ENCODE measurements at regions of chr1 and their contacts with region 1.

Region 1: GRCh38 chr1:28736450-28737306 is at the start of gene YTHDF2:
- DNase-seq: peak; percentile 92 to 100 (median 96)
- ATAC-seq: peak; percentile 94
- H3K4me3 ChIP-seq: peak within 1 kb of the TSS; percentile 96
- H3K27ac ChIP-seq: peak within 1 kb of the TSS; percentile 92
- H3K4me1 ChIP-seq: peaks cover 18 to 24% of the 10 kb centered on the region in 2 experiments; a peak in 4 of 5 replicates
- H3K27me3 ChIP-seq: no peaks in the 10 kb centered on the region
- CTCF ChIP-seq: peak; percentile 82 to 95 (median 86)
- EP300 ChIP-seq: peak; percentile 42; the same call in 1 of the 2 replicates
- POLR2A ChIP-seq: peak; percentile 86
- RAD21 ChIP-seq: peak; percentile 36 to 54
- polyA plus RNA-seq, gene YTHDF2: 41.0 to 47.2 TPM

Region 2: GRCh38 chr1:28359592-28360239 is 377.0 kb before region 1 on chr1:
- CTCF ChIA-PET with region 1: no interaction called
- POLR2A ChIA-PET with region 1: no interaction called
- in situ Hi-C with region 1: no loop called
- intact Hi-C with region 1: loop called (anchors 10 kb)
- DNase-seq: peak; percentile 63 to 84 (median 68)
- ATAC-seq: peak; percentile 88
- H3K4me3 ChIP-seq: no peak overlapping the region
- H3K27ac ChIP-seq: no peak overlapping the region
- H3K4me1 ChIP-seq: peaks cover 6 to 7% of the 10 kb centered on the region in 2 experiments; a peak in 3 of 5 replicates
- H3K27me3 ChIP-seq: no peaks in the 10 kb centered on the region
- CTCF ChIP-seq: peak; percentile 65 to 86 (median 77)
- EP300 ChIP-seq: peak; percentile 33
- POLR2A ChIP-seq: no peak
- RAD21 ChIP-seq: peak; percentile 72 to 83

Region 3: DNA sequence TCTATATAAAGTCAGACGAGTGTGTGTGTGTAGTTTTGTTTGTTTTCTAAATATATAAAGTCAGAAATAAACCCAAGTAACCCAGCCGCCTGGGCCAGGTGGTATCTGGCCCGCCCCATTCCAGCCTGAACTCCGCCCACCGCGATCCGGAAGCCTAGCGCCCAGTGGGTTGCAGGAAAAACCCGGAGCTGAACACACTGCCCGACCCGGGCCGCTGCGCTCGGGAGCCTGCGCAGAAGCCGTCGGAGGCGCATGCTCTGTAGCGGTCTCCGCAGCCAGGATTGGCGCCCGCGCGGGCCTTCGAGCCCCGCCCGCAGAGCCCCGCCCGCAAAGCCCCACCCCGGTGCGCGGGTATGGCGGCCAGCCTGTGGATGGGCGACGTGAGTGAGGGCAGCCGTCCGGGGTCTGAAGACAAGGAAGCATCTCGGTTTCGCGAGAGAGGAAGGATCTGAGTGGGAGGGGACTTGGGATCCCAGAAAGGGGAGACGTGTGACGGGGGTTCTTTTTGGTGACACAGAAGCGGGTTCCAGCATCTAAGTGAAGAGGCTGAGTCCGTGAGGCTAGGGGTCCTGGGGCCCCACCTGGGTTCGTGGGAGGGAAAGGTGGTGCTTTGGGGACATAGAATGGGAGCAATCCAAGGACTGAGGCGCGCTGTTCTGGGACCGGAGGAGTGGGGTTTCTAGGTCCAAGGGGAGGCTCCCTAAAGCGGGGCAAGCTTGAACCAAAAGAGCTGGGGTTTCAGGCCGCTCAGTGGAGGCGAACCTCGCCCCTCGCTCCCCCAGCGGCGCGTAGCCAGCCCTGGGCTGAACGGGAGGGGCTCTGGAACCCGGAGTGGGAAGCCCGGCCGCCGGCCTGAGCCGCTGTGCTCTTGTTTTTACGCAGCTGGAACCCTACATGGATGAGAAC is 183.7 kb before region 1 on chr1 and contains the start of gene TRNAU1AP:
- CTCF ChIA-PET with region 1: no interaction called
- POLR2A ChIA-PET with region 1: no interaction called
- in situ Hi-C with region 1: no loop called
- intact Hi-C with region 1: no loop called
- DNase-seq: peak; percentile 98 to 99 (median 98)
- ATAC-seq: peak; percentile 98
- H3K4me3 ChIP-seq: peak within 1 kb of the TSS; percentile 57
- H3K27ac ChIP-seq: peak within 1 kb of the TSS; percentile 82
- H3K4me1 ChIP-seq: peaks cover 9 to 20% of the 10 kb centered on the region in 2 experiments; a peak in 4 of 5 replicates
- H3K27me3 ChIP-seq: no peaks in the 10 kb centered on the region
- CTCF ChIP-seq: 0 out of 6 replicates have a peak, but pooled peaks of 1 of the 3 experiments have one; percentile 0
- EP300 ChIP-seq: peak; percentile 47
- POLR2A ChIP-seq: peak; percentile 85
- RAD21 ChIP-seq: no peak
- polyA plus RNA-seq, gene TRNAU1AP: 99.0 to 110 TPM

Region 4: DNA sequence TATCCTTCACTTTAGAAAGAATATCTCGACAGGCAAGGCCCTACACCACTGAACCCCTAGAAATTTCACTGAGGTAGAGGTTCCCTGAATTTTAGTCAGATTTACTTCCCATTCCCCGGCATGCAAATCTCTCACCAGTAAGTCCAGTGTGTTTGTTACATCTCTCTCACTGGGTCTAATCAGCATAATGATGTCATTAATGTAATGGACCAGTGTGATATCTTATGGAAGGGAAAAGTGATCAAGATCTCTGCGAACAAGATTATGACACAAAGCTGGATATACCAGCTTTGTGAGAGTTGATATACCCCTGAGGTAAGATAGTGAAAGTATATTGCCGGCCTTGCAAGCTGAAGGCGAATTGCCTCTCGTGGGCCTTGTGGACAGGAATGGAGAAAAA is 80.3 kb before region 1 on chr1:
- CTCF ChIA-PET with region 1: no interaction called
- POLR2A ChIA-PET with region 1: interaction called, 6 read pairs
- in situ Hi-C with region 1: loop called (anchors 5 kb)
- intact Hi-C with region 1: no loop called
- DNase-seq: no peak
- ATAC-seq: no peak
- H3K4me3 ChIP-seq: no peak overlapping the region
- H3K27ac ChIP-seq: no peak overlapping the region
- H3K4me1 ChIP-seq: peaks cover 0 to 2% of the 10 kb centered on the region in 2 experiments; a peak in 1 of 5 replicates
- H3K27me3 ChIP-seq: no peaks in the 10 kb centered on the region
- CTCF ChIP-seq: no peak
- EP300 ChIP-seq: no peak
- POLR2A ChIP-seq: no peak
- RAD21 ChIP-seq: no peak

Region 5: GRCh38 chr1:28668191-28668955 is 68.3 kb before region 1 on chr1 and contains the start of gene GMEB1:
- CTCF ChIA-PET with region 1: no interaction called
- POLR2A ChIA-PET with region 1: interaction called, 14 read pairs
- in situ Hi-C with region 1: no loop called
- intact Hi-C with region 1: loop called (anchors 1 kb)
- DNase-seq: peak; percentile 95 to 100 (median 98)
- ATAC-seq: peak; percentile 91
- H3K4me3 ChIP-seq: peak within 1 kb of the TSS; percentile 98
- H3K27ac ChIP-seq: peak within 1 kb of the TSS; percentile 95
- H3K4me1 ChIP-seq: peaks cover 3 to 28% of the 10 kb centered on the region in 2 experiments; a peak in 4 of 5 replicates
- H3K27me3 ChIP-seq: no peaks in the 10 kb centered on the region
- CTCF ChIP-seq: peak in 1 of 3 experiments; percentile 9; a peak in 1 of 6 replicates
- EP300 ChIP-seq: no peak
- POLR2A ChIP-seq: peak; percentile 62; the same call in 1 of the 2 replicates
- RAD21 ChIP-seq: no peak
- polyA plus RNA-seq, gene GMEB1: 8.5 TPM

Region 6: DNA sequence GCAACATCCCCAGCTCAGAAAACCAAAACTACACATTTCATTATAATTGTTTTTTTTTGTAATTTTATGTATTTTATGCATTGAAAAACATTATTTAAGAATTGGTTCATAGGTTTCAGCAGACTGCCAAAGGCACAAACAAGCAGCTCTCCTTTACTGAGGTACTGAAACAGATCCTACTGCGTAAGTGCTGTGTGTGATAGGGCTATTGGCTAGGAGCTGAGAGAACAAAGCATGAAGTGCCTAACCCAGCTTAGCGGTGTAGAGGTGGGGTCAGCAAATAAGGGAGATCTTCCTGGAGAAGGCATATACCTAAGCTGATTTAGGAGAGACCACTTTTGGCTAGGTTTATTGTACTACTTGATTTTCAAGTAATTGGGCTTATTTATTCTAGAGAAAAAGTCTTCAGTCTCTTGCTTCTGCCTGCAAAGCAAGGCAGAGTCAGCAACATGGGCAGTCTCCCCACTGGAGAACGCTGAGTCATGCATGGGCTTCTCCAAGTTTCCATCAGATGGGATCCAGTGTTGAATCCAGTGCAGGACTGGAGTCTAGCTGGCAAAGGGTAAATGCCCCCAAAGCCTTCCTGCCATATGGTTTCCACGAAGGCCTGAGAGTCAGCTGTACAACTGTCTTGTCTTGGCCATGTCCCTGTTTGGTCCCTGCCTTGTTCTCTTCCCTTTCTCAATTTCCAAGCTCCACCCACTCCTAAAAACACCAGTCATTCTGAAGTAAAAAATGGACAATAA is 17.9 kb before region 1 on chr1:
- CTCF ChIA-PET with region 1: no interaction called
- POLR2A ChIA-PET with region 1: interaction called, 30 read pairs
- in situ Hi-C with region 1: no loop called
- intact Hi-C with region 1: no loop called
- DNase-seq: peak; percentile 57 to 80 (median 63)
- ATAC-seq: peak; percentile 83
- H3K4me3 ChIP-seq: no peak overlapping the region
- H3K27ac ChIP-seq: peak overlapping the region; percentile 66
- H3K4me1 ChIP-seq: peaks cover 0 to 17% of the 10 kb centered on the region in 2 experiments; a peak in 3 of 5 replicates
- H3K27me3 ChIP-seq: no peaks in the 10 kb centered on the region
- CTCF ChIP-seq: no peak
- EP300 ChIP-seq: no peak
- POLR2A ChIP-seq: no peak
- RAD21 ChIP-seq: no peak; a peak in 1 of 4 replicates

Region 7: GRCh38 chr1:28751315-28752060 is 14.8 kb after region 1 on chr1:
- CTCF ChIA-PET with region 1: interaction called, 3 read pairs
- POLR2A ChIA-PET with region 1: interaction called, 47 read pairs
- in situ Hi-C with region 1: no loop called
- intact Hi-C with region 1: no loop called
- DNase-seq: peak in 2 of 4 experiments; percentile 31 to 40
- ATAC-seq: no peak
- H3K4me3 ChIP-seq: no peak overlapping the region
- H3K27ac ChIP-seq: no peak overlapping the region
- H3K4me1 ChIP-seq: peaks cover 28 to 43% of the 10 kb centered on the region in 2 experiments
- H3K27me3 ChIP-seq: no peaks in the 10 kb centered on the region
- CTCF ChIP-seq: no peak
- EP300 ChIP-seq: no peak; the same call in 1 of the 2 replicates
- POLR2A ChIP-seq: no peak
- RAD21 ChIP-seq: no peak

Region 8: GRCh38 chr1:29332204-29332603 is 595.5 kb after region 1 on chr1:
- CTCF ChIA-PET with region 1: no interaction called
- POLR2A ChIA-PET with region 1: no interaction called
- in situ Hi-C with region 1: no loop called
- intact Hi-C with region 1: no loop called
- DNase-seq: peak; percentile 61 to 80 (median 65)
- ATAC-seq: peak; percentile 97
- H3K4me3 ChIP-seq: no peak overlapping the region
- H3K27ac ChIP-seq: no peak overlapping the region
- H3K4me1 ChIP-seq: no peaks in the 10 kb centered on the region
- H3K27me3 ChIP-seq: peaks cover 5 to 26% of the 10 kb centered on the region in 2 experiments; a peak in 4 of 5 replicates
- CTCF ChIP-seq: peak; percentile 85 to 93 (median 87)
- EP300 ChIP-seq: no peak
- POLR2A ChIP-seq: no peak
- RAD21 ChIP-seq: peak; percentile 35 to 80

Measured in K562 (cell line).